ENCODE measurements at regions of chr6 and their contacts with region 1.

Region 1: GRCh38 chr6:108403236-108403635 is 108.4 kb downstream of the AFG1L start:
- DNase-seq: no peak
- ATAC-seq: no peak
- H3K4me3 Mint-ChIP-seq: no peak overlapping the region
- H3K27ac Mint-ChIP-seq: no peak overlapping the region
- H3K4me1 Mint-ChIP-seq: no peaks in the 10 kb centered on the region
- H3K27me3 Mint-ChIP-seq: no peaks in the 10 kb centered on the region

Region 2: DNA sequence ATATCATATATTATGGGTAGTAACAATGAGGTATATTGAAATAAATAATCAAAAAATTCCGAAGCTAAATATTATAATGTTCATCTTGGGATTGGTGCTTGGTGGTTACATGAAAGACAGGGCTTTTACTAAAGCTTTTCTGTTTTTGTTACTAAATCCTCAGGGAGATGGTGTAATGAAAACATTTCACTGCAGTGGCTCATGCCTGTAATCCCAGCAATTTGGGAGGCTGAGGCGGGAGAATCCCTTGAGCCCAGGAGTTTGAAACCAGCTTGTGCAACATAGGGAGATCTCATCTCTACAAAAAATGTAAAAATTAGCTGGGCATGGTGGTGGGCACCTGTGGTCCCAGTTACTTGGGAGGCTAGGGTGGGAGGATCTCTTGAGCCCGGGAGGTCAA is 65.5 kb before region 1 on chr6:
- CTCF ChIA-PET with region 1: no interaction called
- POLR2A ChIA-PET with region 1: no interaction called
- intact Hi-C with region 1: no loop called
- DNase-seq: no peak
- ATAC-seq: no peak
- H3K4me3 Mint-ChIP-seq: no peak overlapping the region
- H3K27ac Mint-ChIP-seq: no peak overlapping the region
- H3K4me1 Mint-ChIP-seq: no peaks in the 10 kb centered on the region
- H3K27me3 Mint-ChIP-seq: no peaks in the 10 kb centered on the region

Region 3: GRCh38 chr6:108673602-108674001 is 270.4 kb after region 1 on chr6:
- CTCF ChIA-PET with region 1: no interaction called
- POLR2A ChIA-PET with region 1: interaction called, 10 read pairs
- intact Hi-C with region 1: no loop called
- DNase-seq: no peak
- ATAC-seq: no peak
- H3K4me3 Mint-ChIP-seq: no peak overlapping the region
- H3K27ac Mint-ChIP-seq: no peak overlapping the region
- H3K4me1 Mint-ChIP-seq: peaks cover 23% of the 10 kb centered on the region
- H3K27me3 Mint-ChIP-seq: no peaks in the 10 kb centered on the region